ENCODE measurements at regions of chr10 and their contacts with region 1.

Region 1: DNA sequence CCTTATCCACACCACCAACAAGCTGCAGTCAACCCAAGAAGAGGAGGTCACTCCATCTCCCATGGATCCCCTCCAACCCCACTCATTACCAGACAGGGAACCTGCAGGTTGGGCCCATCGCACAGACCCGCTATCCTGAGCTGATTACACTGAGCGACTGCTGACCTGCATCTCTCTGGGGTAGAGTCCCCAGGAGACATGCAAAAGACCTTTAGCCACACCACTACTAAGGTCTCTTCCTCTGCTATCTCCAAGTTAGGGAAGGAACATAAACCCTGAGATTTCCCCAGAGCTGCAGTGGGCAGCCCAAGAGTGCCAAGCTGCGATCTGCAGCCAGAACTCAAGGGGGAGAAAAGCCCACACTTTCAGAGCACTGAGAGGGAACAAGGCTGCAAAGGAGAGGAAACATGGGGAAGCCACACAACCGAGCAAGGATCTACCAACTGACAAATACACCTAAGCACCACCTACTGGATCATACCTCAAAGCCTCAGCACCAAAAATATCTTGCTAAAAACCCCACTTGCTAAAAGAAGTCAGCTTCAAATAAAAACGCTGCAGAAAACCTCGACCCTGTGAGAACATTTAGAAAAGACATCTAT is 298.2 kb downstream of the SORCS1 start:
- DNase-seq: no peak
- ATAC-seq: no peak
- H3K4me3 ChIP-seq: no peak overlapping the region
- H3K4me3 Mint-ChIP-seq: no peak overlapping the region
- H3K27ac ChIP-seq: no peak overlapping the region
- H3K27ac Mint-ChIP-seq: no peak overlapping the region
- H3K4me1 ChIP-seq: no peaks in the 10 kb centered on the region
- H3K4me1 Mint-ChIP-seq: peaks cover 0 to 6% of the 10 kb centered on the region in 2 donors
- H3K27me3 ChIP-seq: no peaks in the 10 kb centered on the region
- H3K27me3 Mint-ChIP-seq: no peaks in the 10 kb centered on the region
- CTCF ChIP-seq: no peak

Region 2: GRCh38 chr10:106454233-106454632 is 412.1 kb before region 1 on chr10:
- intact Hi-C with region 1: no loop called
- DNase-seq: no peak
- ATAC-seq: no peak
- H3K4me3 ChIP-seq: no peak overlapping the region
- H3K4me3 Mint-ChIP-seq: no peak overlapping the region
- H3K27ac ChIP-seq: no peak overlapping the region
- H3K27ac Mint-ChIP-seq: no peak overlapping the region
- H3K4me1 ChIP-seq: no peaks in the 10 kb centered on the region
- H3K4me1 Mint-ChIP-seq: no peaks in the 10 kb centered on the region
- H3K27me3 ChIP-seq: no peaks in the 10 kb centered on the region
- H3K27me3 Mint-ChIP-seq: no peaks in the 10 kb centered on the region
- CTCF ChIP-seq: no peak

Region 3: GRCh38 chr10:106619346-106619745 is 247.0 kb before region 1 on chr10:
- intact Hi-C with region 1: no loop called
- DNase-seq: no peak
- ATAC-seq: no peak
- H3K4me3 ChIP-seq: no peak overlapping the region
- H3K4me3 Mint-ChIP-seq: no peak overlapping the region
- H3K27ac ChIP-seq: no peak overlapping the region
- H3K27ac Mint-ChIP-seq: no peak overlapping the region
- H3K4me1 ChIP-seq: no peaks in the 10 kb centered on the region
- H3K4me1 Mint-ChIP-seq: no peaks in the 10 kb centered on the region
- H3K27me3 ChIP-seq: no peaks in the 10 kb centered on the region
- H3K27me3 Mint-ChIP-seq: no peaks in the 10 kb centered on the region
- CTCF ChIP-seq: no peak

Region 4: DNA sequence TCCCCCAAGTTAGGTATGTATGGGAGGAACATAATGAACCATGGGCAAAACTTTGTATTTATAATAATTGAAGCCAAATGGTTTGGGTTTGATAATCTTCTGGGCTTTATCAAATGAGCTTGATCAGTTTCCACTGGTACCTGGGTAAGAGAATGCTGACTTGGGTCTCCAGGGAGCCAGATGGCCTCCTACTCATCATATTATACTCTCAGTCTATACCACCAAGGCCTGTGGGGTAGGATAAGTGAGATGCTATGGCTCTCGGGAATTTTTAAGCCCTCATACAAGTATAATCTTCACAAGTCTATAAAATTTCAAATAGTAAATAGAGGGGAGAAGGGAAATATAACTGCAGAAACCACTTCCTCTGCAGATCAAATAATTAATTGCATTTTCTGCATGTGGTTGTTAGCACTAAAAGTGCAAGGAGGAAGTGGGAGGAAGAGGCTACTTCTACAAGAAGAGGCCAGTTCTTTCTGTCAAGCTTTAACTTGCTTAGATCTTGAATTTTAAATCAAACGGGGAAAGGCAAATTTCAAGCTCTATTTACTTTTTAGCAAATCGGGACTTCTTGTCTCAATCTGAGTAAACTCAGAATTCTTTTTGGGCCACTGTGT is 50.8 kb before region 1 on chr10:
- intact Hi-C with region 1: loop called (anchors 10 kb)
- DNase-seq: no peak
- ATAC-seq: peak; percentile 58 to 81 (median 59)
- H3K4me3 ChIP-seq: no peak overlapping the region
- H3K4me3 Mint-ChIP-seq: peak overlapping the region; percentile 82
- H3K27ac ChIP-seq: no peak overlapping the region
- H3K27ac Mint-ChIP-seq: peak overlapping the region; percentile 70 to 84
- H3K4me1 ChIP-seq: peaks cover 23% of the 10 kb centered on the region
- H3K4me1 Mint-ChIP-seq: peaks cover 55 to 67% of the 10 kb centered on the region in 2 donors
- H3K27me3 ChIP-seq: no peaks in the 10 kb centered on the region
- H3K27me3 Mint-ChIP-seq: no peaks in the 10 kb centered on the region
- CTCF ChIP-seq: no peak

Measured in natural killer cell (primary cell).